Panc1 (cell line): ENCODE measurements at regions of chr1 and their contacts with region 1.

Region 1: GRCh38 chr1:154936555-154937084 is at the start of gene PMVK:
- DNase-seq: peak; percentile 85
- ATAC-seq: peak; percentile 95
- H3K4me3 ChIP-seq: peak within 1 kb of the TSS; percentile 68 to 94
- H3K27ac ChIP-seq: peak within 1 kb of the TSS; percentile 97
- H3K4me1 ChIP-seq: peaks cover 11% of the 10 kb centered on the region
- H3K27me3 ChIP-seq: no peaks in the 10 kb centered on the region
- CTCF ChIP-seq: no peak; the same call in 1 of the 2 replicates
- total RNA-seq, gene PMVK: 42.2 TPM

Region 2: DNA sequence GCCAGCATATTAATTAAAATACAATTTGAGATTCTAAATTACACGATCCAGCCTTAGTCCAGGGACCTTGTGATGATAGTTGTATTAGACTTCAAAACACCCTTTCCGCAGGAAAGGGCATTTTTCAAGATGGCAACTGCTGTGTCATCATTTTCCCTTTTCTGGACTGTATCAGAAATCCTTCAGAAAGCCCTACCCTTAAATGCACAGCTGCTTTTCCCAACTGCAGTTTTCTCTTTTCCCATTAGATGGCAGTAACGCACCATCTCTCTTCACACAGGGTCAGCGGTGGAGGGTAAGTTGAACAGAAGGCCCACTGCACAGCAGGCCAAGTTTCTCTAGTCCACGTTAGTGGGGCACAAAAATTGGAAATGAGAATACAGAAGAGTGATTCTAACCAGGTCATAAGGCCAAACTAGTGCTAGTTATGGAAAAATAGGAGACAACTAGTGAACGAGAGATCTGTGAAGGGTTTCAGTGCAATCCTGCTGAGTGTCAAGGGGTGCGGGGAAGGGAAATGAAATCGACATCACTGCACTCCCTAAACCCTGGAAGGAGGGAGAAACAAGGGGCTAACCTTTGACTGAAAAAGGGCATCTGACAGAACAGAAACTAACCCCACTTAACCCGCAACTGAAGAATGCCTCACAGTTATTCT is 456.7 kb before region 1 on chr1:
- CTCF ChIA-PET with region 1: no interaction called
- POLR2A ChIA-PET with region 1: no interaction called
- in situ Hi-C with region 1: no loop called
- intact Hi-C with region 1: loop called (anchors 5 kb)
- DNase-seq: peak; percentile 86
- ATAC-seq: peak; percentile 98
- H3K4me3 ChIP-seq: no peak overlapping the region
- H3K27ac ChIP-seq: no peak overlapping the region
- H3K4me1 ChIP-seq: peaks cover 2% of the 10 kb centered on the region; the same call in 1 of the 2 replicates
- H3K27me3 ChIP-seq: no peaks in the 10 kb centered on the region
- CTCF ChIP-seq: peak; percentile 94

Region 3: DNA sequence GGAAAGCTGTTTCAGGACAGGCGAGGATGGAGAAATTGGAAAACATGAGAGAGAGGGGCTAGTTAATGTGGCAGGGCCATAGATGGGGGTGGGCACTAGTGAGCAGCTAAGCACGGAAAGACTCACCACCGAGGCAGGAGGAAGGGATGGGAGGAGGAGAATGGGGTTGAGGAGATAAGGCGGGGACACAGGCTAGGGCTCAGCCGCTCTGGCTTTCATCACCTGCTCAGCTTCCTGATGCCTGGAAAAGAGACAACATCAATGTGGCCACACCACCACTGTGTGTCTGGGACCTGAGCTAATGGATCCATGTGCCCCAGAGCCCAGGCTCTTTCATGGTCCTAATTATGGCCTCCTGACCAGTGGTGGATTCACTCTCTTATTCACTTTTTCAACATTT is 27.7 kb before region 1 on chr1:
- CTCF ChIA-PET with region 1: interaction called, 12 read pairs
- POLR2A ChIA-PET with region 1: no interaction called
- in situ Hi-C with region 1: no loop called
- intact Hi-C with region 1: no loop called
- DNase-seq: no peak
- ATAC-seq: no peak
- H3K4me3 ChIP-seq: no peak overlapping the region
- H3K27ac ChIP-seq: no peak overlapping the region
- H3K4me1 ChIP-seq: no peaks in the 10 kb centered on the region
- H3K27me3 ChIP-seq: no peaks in the 10 kb centered on the region
- CTCF ChIP-seq: no peak

Region 4: DNA sequence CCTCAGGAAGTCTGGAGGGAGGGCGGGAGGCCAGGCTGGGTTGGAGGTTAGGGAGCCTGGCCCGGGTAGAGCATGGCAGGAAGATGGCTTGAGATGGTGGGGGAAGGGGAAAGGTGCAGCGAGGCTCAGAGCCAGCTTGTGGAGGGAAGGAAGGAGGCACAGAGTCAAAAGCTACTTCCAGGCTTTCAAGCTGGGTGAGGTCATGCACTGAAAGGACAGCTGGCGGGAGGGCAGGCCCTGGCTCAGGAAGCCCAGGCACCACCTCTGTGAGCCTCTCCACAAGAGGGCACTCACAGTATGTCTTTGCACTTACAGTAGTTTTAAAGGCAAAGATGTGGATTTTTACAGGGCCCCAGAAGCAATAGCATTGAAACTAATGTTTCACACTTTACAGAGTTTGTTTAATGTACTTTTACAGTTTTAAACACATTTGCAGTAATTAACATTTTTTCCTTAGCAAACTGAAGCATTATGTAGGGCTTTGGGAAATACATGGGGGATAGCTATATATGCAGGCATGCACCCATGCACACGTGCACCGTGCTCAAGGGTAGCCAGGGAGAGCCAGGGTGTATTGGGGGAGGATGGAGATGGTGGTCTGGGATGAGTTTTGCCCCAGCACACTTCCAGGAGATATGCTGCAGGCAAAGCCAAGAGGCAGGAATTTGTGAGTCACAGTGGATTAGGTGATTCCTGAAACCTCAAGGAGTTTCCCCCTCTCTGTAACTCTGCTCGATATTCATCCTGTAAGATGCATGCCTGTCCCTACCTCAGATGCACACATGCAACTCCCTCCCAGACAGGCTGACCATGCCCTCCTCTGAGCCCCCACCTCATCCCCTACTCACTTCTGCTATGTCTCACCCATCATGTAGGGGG is 108.4 kb after region 1 on chr1:
- CTCF ChIA-PET with region 1: no interaction called
- POLR2A ChIA-PET with region 1: no interaction called
- in situ Hi-C with region 1: no loop called
- intact Hi-C with region 1: no loop called
- DNase-seq: peak; percentile 45
- ATAC-seq: peak; percentile 94
- H3K4me3 ChIP-seq: no peak overlapping the region
- H3K27ac ChIP-seq: no peak overlapping the region
- H3K4me1 ChIP-seq: peaks cover 5% of the 10 kb centered on the region
- H3K27me3 ChIP-seq: no peaks in the 10 kb centered on the region
- CTCF ChIP-seq: peak; percentile 89

Region 5: GRCh38 chr1:155127105-155127964 is 190.7 kb after region 1 on chr1 and contains the start of gene EFNA1:
- CTCF ChIA-PET with region 1: no interaction called
- POLR2A ChIA-PET with region 1: no interaction called
- in situ Hi-C with region 1: no loop called
- intact Hi-C with region 1: no loop called
- DNase-seq: no peak
- ATAC-seq: peak; percentile 71
- H3K4me3 ChIP-seq: peak within 1 kb of the TSS; percentile 64 to 65
- H3K27ac ChIP-seq: peak within 1 kb of the TSS; percentile 92
- H3K4me1 ChIP-seq: peaks cover 59% of the 10 kb centered on the region
- H3K27me3 ChIP-seq: no peaks in the 10 kb centered on the region
- CTCF ChIP-seq: no peak
- total RNA-seq, gene EFNA1: 23.8 TPM

Region 6: GRCh38 chr1:155929057-155929456 is 992.4 kb after region 1 on chr1:
- CTCF ChIA-PET with region 1: no interaction called
- POLR2A ChIA-PET with region 1: no interaction called
- in situ Hi-C with region 1: no loop called
- intact Hi-C with region 1: no loop called
- DNase-seq: no peak
- ATAC-seq: no peak
- H3K4me3 ChIP-seq: no peak overlapping the region
- H3K27ac ChIP-seq: no peak overlapping the region
- H3K4me1 ChIP-seq: peaks cover 27% of the 10 kb centered on the region
- H3K27me3 ChIP-seq: no peaks in the 10 kb centered on the region
- CTCF ChIP-seq: no peak